ENCODE measurements at regions of chr2 and their contacts with region 1.

Region 1: GRCh38 chr2:18987592-18988073 is 370.8 kb downstream of the OSR1 start:
- DNase-seq: peak; percentile 58 to 66
- ATAC-seq: peak; percentile 60 to 85
- H3K4me3 ChIP-seq: no peak overlapping the region
- H3K27ac ChIP-seq: no peak overlapping the region
- H3K4me1 ChIP-seq: peaks cover 5 to 14% of the 10 kb centered on the region in 2 donors
- H3K27me3 ChIP-seq: no peaks in the 10 kb centered on the region
- CTCF ChIP-seq: peak in 2 of 5 experiments; percentile 33 to 42
- POLR2A ChIP-seq: no peak

Region 2: DNA sequence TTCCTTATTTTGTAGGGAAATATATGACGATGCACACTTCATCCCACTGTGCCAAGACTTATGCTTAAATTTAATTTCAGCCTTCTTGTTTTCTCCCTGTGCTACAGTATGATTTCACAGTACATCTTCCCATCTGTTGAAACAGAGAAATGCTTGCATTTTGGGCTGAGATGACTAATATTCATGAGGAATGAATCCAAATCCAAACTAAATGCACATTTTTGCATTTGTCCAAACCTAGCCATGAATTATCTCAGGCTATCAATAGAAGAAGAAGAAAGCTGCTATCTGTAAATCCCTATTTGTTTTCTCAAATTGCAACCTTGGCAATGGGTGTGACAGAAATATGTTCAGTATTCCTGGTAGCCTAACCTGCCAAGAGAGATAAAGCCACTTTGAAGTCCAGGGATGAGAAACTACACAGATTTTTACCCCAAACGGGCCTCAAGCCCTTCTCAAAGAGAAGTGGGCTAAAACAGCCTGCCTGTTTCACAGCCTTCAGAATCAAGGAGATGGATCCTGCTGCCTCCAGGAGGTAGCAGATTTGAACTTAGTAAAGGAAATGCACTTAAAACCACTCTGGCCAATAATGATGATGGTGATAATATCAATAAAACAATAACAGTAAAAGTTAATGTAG is 91.4 kb before region 1 on chr2:
- in situ Hi-C with region 1: no loop called
- intact Hi-C with region 1: no loop called
- DNase-seq: no peak
- ATAC-seq: no peak
- H3K4me3 ChIP-seq: no peak overlapping the region
- H3K27ac ChIP-seq: no peak overlapping the region
- H3K4me1 ChIP-seq: peaks cover 4 to 5% of the 10 kb centered on the region in 2 donors
- H3K27me3 ChIP-seq: no peaks in the 10 kb centered on the region
- CTCF ChIP-seq: no peak
- POLR2A ChIP-seq: no peak

Region 3: DNA sequence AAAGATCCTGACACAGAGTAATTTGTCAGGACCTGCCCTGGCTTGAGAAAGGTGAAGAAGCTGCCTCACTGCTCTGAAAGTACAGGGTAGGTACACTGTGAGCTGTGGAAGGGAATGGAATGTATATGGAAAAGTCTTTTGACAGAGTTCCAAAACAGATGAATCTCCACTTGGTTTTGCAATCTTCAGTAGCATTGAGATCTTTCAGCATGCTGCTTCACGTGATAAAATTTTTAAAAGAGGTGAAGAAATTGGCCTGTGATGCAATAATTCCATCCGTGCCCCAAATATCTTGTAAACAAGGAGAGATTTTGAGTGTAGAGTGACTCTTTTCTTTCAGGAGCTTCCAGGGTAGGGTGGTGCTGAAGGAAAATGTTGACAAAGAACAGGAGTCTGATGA is 247.7 kb after region 1 on chr2:
- in situ Hi-C with region 1: no loop called
- intact Hi-C with region 1: loop called (anchors 10 kb)
- DNase-seq: peak in 1 of 2 donors; percentile 15
- ATAC-seq: peak; percentile 69 to 75
- H3K4me3 ChIP-seq: no peak overlapping the region
- H3K27ac ChIP-seq: no peak overlapping the region
- H3K4me1 ChIP-seq: no peaks in the 10 kb centered on the region
- H3K27me3 ChIP-seq: no peaks in the 10 kb centered on the region
- CTCF ChIP-seq: no peak
- POLR2A ChIP-seq: no peak

Region 4: GRCh38 chr2:19538405-19538963 is 550.9 kb after region 1 on chr2:
- in situ Hi-C with region 1: no loop called
- intact Hi-C with region 1: loop called (anchors 2 kb)
- DNase-seq: peak; percentile 45 to 61
- ATAC-seq: peak; percentile 96 to 98
- H3K4me3 ChIP-seq: no peak overlapping the region
- H3K27ac ChIP-seq: peak overlapping the region; percentile 13 to 63 (median 54)
- H3K4me1 ChIP-seq: peaks cover 11 to 12% of the 10 kb centered on the region in 2 donors
- H3K27me3 ChIP-seq: no peaks in the 10 kb centered on the region
- CTCF ChIP-seq: no peak
- POLR2A ChIP-seq: no peak

Measured in gastrocnemius medialis (tissue), 4 donors.